ENCODE measurements at regions of chr15 and their contacts with region 1.

Region 1: DNA sequence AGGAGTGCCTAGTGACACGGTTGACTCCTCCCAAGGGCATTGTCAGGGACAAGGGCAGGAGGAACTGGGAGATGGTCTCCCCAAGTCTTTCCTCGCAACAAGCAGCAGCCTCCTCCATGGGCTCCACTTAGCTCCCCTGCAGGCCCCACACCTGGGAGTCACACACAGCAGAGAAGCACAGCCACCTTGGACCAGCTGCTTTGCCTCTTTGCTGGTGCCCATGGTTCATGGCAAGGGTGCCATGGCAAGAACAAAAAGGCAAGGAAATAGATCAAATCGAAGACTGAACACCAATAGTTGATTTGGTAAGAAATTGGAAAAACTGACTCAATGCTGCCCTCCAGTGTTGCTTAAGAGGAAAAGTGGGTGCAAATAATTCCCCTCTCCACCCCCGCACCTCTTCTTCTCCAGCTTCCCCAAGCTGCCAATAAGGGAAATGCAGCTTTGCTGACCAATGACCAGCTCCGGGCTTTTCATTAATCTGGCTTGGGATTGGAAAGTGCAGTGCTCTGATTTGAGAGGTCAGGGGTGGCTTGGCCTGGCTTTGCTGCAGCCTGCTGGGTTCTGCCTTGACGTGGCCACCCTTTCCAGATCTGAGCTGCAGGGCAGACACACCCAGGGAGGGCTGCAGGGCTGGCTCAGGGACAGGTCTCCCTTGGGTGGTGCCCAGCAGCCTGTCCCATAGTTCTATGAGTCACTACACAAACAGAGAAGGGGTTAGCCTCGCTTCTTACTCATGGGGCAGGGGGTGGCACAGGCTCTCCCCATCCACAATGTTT is 162.0 kb downstream of the KLF13 start:
- DNase-seq: peak in 4 of 5 donors; percentile 43 to 62 (median 58)
- ATAC-seq: peak; percentile 52 to 81 (median 80)
- H3K4me3 ChIP-seq: no peak overlapping the region
- H3K27ac ChIP-seq: peak overlapping the region in 4 of 12 donors; percentile 33 to 51 (median 41)
- H3K4me1 ChIP-seq: peaks cover 0 to 26% (median 17%) of the 10 kb centered on the region in 12 donors
- H3K27me3 ChIP-seq: peaks cover 0 to 10% (median 0%) of the 10 kb centered on the region in 9 donors
- CTCF ChIP-seq: peak; percentile 70 to 99 (median 90)
- POLR2A ChIP-seq: no peak

Region 2: DNA sequence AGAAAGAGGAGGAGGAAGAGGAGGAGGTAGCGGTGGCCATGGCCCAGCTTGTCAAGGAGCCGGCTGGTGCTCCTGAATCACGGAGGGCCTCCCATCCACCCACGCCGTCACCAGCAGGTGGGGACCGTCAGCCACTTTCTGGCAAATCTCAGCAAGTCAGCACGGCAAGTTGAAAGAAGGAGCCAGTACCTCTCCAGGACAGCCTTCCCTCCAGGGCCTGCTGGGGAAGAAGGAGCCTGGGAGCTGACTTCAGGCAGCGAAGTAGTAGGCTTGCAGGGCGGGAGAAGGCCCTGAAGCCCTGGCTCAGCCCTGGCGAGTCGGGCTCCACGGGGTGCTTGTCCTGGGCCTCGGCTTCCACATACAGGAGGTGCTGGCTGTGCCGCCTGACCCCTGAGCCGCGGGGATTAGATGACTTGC is 287.9 kb before region 1 on chr15:
- intact Hi-C with region 1: loop called (anchors 1 to 5 kb)
- DNase-seq: peak; percentile 74 to 88 (median 83)
- ATAC-seq: peak; percentile 72 to 97 (median 93)
- H3K4me3 ChIP-seq: no peak overlapping the region
- H3K27ac ChIP-seq: no peak overlapping the region
- H3K4me1 ChIP-seq: peaks cover 0 to 8% (median 0%) of the 10 kb centered on the region in 12 donors
- H3K27me3 ChIP-seq: no peaks in the 10 kb centered on the region
- CTCF ChIP-seq: peak; percentile 41 to 90 (median 54)
- POLR2A ChIP-seq: no peak

Region 3: DNA sequence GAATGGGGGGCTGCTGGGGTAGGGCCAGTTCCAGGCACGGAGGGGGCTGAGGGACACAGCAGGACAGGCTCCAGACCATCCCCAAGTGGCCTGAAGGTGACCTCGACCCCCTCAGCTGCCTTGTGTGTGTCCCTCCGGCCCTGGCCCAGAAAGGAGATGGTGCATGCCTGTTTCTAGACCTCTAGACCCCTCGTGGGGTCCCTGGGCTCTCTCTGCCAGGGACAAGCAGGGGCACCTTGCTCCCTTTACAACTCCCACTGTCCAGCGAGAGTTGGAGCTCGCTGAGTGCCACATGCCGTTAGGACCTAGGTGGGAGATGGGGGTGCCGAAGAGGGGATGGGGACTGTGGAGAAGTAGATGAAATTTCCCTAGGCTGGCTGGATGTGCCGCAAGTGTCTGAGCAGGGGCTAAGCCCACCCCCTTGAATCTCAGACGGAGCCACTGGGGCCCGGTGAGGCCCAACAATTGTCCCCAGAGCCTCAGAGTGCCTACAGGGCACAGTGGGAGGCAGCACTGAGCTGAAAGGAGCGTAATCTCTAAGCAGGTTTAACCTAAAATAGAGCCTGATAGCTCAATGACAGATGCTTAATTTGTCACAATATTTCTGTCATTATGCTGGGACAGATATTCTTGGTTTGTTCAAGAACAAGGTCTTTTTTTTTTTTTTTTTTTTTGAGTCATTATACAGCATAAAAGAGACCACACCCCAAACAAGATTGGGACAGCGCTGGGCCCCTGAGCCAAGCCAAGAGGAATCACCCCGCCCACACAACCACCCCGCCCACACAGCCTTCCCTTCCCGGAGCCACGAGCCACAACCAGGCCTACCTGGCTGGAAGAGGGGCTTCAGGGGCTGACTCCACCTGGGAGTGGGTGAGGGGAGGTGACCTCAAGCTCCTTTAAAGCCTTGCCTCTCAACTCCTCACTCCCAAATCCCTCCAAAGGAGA is 185.6 kb before region 1 on chr15:
- intact Hi-C with region 1: loop called in 1 of 10 experiments (anchors 5 kb)
- DNase-seq: peak in 3 of 5 donors; percentile 43 to 66 (median 52)
- ATAC-seq: peak; percentile 26 to 49 (median 46)
- H3K4me3 ChIP-seq: no peak overlapping the region
- H3K27ac ChIP-seq: peak overlapping the region in 2 of 12 donors; percentile 6 to 29
- H3K4me1 ChIP-seq: peaks cover 0 to 81% (median 60%) of the 10 kb centered on the region in 12 donors
- H3K27me3 ChIP-seq: peaks cover 0 to 8% (median 0%) of the 10 kb centered on the region in 9 donors
- CTCF ChIP-seq: peak in 4 of 12 donors; percentile 7 to 36 (median 30)
- POLR2A ChIP-seq: no peak

Region 4: DNA sequence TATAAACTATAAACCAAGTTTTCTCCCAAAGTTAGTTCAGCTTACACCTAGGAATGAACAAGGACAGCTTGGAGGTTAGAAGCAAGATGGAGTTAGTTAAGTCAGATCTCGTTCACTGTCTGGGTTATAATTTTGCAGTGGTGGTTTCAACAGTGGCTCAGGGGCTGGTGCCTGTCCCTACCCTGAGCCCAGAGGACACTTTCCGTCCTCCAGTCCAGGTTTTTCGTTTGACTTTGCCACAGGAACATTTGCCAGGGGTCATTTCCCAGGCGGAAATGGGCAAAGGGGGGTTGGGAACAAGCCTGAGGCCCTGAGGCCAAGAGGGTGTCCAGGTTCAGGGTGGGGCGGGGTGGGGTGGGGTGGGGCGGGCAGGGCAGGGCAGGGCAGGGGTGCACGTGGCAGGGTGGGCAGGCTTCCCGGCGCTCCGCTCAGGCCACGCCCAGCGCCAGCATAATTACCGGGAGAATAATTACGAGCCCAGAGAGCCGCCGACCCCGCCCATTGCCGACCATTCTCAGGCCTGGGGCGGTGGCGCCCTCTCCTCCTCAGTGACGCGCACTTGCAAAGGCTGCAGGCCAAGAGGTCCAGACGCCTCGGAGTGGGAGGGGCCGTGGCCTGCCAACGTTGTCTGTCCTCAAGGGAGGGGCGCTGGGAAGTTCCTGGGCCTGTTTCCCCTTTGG is 91.6 kb before region 1 on chr15:
- intact Hi-C with region 1: loop called in 3 of 10 experiments (anchors 5 to 10 kb)
- DNase-seq: peak; percentile 92 to 96 (median 93)
- ATAC-seq: peak; percentile 88 to 94 (median 94)
- H3K4me3 ChIP-seq: peak overlapping the region in 5 of 12 donors; percentile 0 to 32 (median 13)
- H3K27ac ChIP-seq: peak overlapping the region; percentile 53 to 86 (median 74)
- H3K4me1 ChIP-seq: peaks cover 0 to 40% (median 25%) of the 10 kb centered on the region in 12 donors
- H3K27me3 ChIP-seq: no peaks in the 10 kb centered on the region
- CTCF ChIP-seq: peak in 7 of 12 donors; percentile 9 to 57 (median 37)
- POLR2A ChIP-seq: no peak

Region 5: GRCh38 chr15:31442203-31443111 is 46.2 kb before region 1 on chr15:
- intact Hi-C with region 1: loop called in 9 of 10 experiments (anchors 2 to 5 kb)
- DNase-seq: no peak
- ATAC-seq: peak; percentile 41 to 80 (median 55)
- H3K4me3 ChIP-seq: no peak overlapping the region
- H3K27ac ChIP-seq: peak overlapping the region in 8 of 12 donors; percentile 18 to 86 (median 52)
- H3K4me1 ChIP-seq: peaks cover 0 to 42% (median 11%) of the 10 kb centered on the region in 12 donors
- H3K27me3 ChIP-seq: no peaks in the 10 kb centered on the region
- CTCF ChIP-seq: peak in 3 of 12 donors; percentile 17 to 37 (median 27)
- POLR2A ChIP-seq: no peak

Region 6: GRCh38 chr15:31605371-31605931 is 116.8 kb after region 1 on chr15:
- intact Hi-C with region 1: no loop called
- DNase-seq: no peak
- ATAC-seq: peak; percentile 15 to 69 (median 45)
- H3K4me3 ChIP-seq: no peak overlapping the region
- H3K27ac ChIP-seq: no peak overlapping the region
- H3K4me1 ChIP-seq: peaks cover 0 to 5% (median 0%) of the 10 kb centered on the region in 12 donors
- H3K27me3 ChIP-seq: no peaks in the 10 kb centered on the region
- CTCF ChIP-seq: peak in 4 of 12 donors; percentile 20 to 31 (median 23)
- POLR2A ChIP-seq: no peak